Transverse colon (tissue), 4 donors: ENCODE measurements at regions of chr6 and their contacts with region 1.

Region 1: DNA sequence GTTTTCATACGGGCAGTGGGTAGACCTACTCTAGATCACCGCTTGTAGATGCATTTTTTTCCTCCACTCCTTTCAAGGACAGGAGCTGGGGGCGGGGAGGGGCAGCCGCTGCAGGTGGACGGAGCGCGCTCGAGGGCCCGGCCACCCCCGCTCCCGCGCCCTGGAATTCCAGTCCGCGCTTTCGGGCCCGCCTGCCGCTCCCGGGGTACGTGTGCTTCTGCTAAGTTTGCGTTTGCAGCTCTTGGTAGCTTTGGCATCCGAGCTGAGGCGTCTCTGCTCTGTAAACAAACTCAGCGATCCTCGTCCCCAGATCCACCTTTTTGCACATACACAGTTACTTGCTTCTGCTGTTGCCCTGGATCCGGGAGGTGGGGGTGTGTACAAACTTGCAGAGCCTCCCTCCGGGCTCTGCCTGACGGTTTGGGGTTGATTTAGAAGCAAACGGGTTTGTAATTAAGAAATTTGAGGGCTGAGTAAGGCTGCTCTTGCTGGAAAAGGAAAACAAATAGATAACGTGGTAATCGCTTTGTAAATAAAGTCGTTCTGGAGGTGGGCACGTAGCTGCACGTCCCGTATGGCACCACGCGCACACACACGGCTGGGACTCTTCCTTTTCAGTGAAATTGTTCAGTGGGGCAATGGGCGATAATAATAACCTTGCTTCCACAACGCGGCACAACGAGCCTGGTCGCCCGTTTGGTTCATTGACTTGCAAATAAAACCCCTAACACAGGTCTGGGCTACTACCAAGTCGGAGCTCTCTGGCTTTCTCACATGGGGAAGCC is 976 bp upstream of the CITED2 start:
- DNase-seq: peak; percentile 95
- H3K4me3 ChIP-seq: peak overlapping the region; percentile 80 to 87 (median 86)
- H3K27ac ChIP-seq: peak overlapping the region; percentile 92 to 99 (median 96)
- H3K4me1 ChIP-seq: peaks cover 0 to 28% (median 22%) of the 10 kb centered on the region in 4 donors
- H3K27me3 ChIP-seq: no peaks in the 10 kb centered on the region
- CTCF ChIP-seq: peak in 1 of 5 experiments; percentile 4
- EP300 ChIP-seq: peak; percentile 43
- POLR2A ChIP-seq: peak; percentile 76

Region 2: GRCh38 chr6:138817822-138818308 is 557.6 kb before region 1 on chr6:
- in situ Hi-C with region 1: loop called in 2 of 4 experiments (anchors 25 kb)
- intact Hi-C with region 1: no loop called
- DNase-seq: peak; percentile 89
- H3K4me3 ChIP-seq: no peak overlapping the region
- H3K27ac ChIP-seq: peak overlapping the region; percentile 50 to 72 (median 66)
- H3K4me1 ChIP-seq: peaks cover 0 to 26% (median 13%) of the 10 kb centered on the region in 4 donors
- H3K27me3 ChIP-seq: no peaks in the 10 kb centered on the region
- CTCF ChIP-seq: no peak
- EP300 ChIP-seq: no peak
- POLR2A ChIP-seq: peak; percentile 17

Region 3: DNA sequence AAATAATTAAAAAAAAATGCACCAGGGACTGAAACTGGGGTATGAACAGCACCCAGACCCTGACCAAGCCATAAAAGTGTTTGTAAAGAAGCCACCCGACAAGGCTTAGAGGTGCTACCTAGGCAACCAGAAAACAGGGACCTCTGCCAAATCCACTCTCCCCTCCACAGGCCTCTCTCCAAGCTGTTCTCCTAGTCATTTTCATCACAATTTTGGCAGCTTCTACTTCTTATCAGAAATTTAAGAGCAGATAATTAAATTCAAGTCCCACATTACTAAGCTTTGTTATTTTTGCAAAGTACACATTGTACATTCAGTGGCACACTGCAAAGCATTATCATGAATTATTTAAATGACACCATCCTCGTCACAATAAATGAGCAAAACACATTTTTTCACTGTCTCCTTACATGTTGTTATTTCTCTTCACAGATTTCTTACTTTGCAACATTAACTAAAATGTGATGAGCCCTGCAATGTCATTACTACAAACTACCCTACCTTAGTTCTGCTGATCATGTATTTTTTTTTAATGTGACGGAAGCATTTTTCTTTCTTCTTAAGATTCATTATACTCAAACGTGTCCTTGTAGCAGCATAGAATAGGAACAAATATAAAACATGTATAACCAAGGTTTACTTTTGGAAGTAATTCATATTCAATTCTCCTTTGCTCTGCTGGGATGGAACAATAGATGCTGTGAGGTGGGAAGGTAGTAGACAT is 541.4 kb before region 1 on chr6:
- in situ Hi-C with region 1: no loop called
- intact Hi-C with region 1: no loop called
- DNase-seq: no peak
- H3K4me3 ChIP-seq: no peak overlapping the region
- H3K27ac ChIP-seq: peak overlapping the region in 2 of 4 donors; percentile 47 to 52
- H3K4me1 ChIP-seq: peaks cover 0 to 6% (median 0%) of the 10 kb centered on the region in 4 donors
- H3K27me3 ChIP-seq: no peaks in the 10 kb centered on the region
- CTCF ChIP-seq: no peak
- EP300 ChIP-seq: no peak
- POLR2A ChIP-seq: no peak

Region 4: DNA sequence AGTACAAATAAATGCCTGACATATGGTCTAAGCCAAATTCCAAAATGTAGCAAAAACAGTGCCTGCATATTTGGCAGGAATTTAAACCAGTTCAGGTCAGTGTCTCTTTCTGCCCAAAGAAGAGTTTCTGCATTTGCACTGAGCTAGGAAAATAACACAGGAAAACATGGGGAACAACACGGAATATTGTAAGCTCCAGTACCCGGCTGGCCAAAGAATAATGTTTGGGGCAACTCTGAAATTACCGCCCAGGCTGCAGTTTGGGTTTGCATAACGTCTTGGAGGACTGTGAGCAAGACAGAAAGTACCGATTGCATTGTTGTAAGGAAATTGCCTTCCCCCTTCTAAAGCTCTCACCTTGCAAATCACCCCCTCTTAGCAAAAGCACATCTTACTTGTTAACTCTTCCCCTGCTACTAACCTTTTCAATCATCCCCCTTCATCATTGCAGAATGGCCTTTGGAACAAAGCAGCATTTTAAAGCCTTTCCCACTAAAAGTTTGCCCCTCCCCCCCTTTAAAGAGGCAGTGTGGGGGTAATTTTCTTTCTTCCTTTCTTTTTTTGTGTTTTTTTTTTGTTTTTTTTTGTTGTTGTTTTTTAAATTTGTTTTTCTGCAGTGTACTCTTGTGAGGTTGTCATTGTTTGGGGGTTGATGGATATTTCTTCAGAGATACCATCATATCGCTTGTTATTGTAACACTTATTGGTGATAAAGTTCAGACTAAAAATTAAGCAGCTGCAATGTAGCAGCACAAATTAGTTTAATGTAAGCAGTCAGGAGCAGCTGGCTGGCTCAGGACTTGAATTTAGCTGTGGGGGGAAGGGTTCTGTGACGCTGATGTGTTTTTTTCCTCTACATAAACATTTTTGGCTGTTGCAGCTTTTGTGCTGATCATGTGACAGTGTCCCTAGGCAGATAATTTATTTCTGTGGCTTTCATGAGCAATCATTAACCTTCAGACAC is 99.0 kb after region 1 on chr6:
- in situ Hi-C with region 1: no loop called
- intact Hi-C with region 1: loop called (anchors 10 kb)
- DNase-seq: peak; percentile 11
- H3K4me3 ChIP-seq: no peak overlapping the region
- H3K27ac ChIP-seq: peak overlapping the region; percentile 60 to 70 (median 64)
- H3K4me1 ChIP-seq: peaks cover 0 to 26% (median 2%) of the 10 kb centered on the region in 4 donors
- H3K27me3 ChIP-seq: no peaks in the 10 kb centered on the region
- CTCF ChIP-seq: no peak
- EP300 ChIP-seq: no peak
- POLR2A ChIP-seq: no peak

Region 5: DNA sequence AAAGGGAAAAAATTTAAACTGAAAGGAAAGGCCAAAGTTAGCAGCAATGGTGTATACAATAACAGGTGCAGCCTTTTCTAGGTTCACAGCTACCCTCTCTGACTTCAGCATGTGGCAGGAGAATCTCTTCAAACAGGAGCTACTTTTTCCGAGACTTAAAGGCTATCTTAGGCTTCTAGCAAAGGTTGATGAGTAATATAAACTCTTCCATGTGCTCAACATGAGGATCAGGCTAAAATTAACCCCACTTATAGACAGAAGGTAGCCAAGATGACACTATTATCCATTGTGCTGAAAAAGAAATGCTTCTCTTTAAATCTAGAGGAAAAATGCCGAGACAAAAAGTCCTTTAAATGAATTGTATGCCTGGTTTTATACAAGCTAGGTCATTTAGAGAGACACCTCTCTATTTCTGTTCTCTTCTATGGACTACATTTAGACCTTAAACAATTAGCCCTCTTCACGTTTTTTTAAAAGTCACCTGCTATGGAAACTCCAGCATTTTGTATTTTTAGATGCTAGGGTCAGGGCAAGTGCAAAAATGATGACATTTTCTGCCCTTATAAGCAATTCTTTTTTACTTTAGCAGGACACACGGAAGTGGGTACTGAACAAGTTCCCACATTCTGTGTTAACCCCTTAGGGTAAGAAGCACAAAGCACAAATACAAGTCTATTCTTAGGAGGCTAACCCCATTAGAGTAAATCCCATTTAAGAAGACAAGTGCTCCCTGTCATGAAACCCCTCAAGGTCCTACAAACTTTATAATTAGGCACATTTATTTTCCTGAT is 215.8 kb after region 1 on chr6:
- in situ Hi-C with region 1: loop called in 3 of 4 experiments (anchors 5 to 25 kb)
- intact Hi-C with region 1: loop called (anchors 2 kb)
- DNase-seq: no peak
- H3K4me3 ChIP-seq: no peak overlapping the region
- H3K27ac ChIP-seq: peak overlapping the region; percentile 81 to 84 (median 83)
- H3K4me1 ChIP-seq: peaks cover 39 to 92% (median 66%) of the 10 kb centered on the region in 4 donors
- H3K27me3 ChIP-seq: no peaks in the 10 kb centered on the region
- CTCF ChIP-seq: no peak
- EP300 ChIP-seq: no peak
- POLR2A ChIP-seq: no peak

Region 6: DNA sequence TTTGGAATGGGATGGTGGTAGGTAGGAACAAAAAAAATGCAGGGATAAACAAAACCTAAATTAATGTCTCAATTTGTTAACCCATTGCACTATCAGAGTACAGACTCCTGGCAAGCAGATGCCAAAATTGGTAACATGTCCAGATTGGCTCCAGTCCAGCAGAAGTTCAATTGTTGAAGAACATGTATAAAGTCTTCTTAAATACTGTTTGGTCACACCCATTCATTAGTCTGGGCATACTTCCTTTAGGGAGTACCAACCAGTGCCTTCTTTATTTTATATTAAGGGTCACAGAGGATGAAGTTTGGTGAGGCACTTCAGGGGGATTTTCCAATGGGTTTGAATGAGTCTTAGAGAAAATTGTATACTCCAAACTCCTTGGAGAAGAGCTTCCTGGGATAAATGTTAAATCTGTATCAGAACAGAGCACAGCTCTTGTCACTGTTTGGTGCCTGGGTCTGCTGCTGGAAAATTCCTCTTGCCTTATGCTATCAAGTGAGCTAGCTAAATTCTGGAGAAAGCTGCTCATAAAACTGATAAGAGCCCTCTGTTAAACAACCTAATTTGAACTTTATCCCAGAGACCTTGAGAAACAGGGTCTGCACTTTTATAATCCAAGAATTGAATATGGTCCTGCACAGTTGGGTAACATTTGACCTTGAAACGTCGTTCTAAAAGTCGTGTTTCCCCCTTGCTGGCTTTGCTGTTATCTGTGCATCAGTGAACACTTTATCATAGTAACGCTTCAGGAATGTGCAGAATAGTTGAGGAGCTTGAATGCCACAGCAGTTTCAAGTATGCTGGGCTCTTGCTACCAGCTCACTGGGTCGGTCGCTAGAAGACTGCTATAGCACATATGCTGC is 333.1 kb after region 1 on chr6:
- in situ Hi-C with region 1: no loop called
- intact Hi-C with region 1: loop called (anchors 10 kb)
- DNase-seq: no peak
- H3K4me3 ChIP-seq: no peak overlapping the region
- H3K27ac ChIP-seq: peak overlapping the region; percentile 4 to 57 (median 26)
- H3K4me1 ChIP-seq: peaks cover 13 to 31% (median 24%) of the 10 kb centered on the region in 4 donors
- H3K27me3 ChIP-seq: no peaks in the 10 kb centered on the region
- CTCF ChIP-seq: no peak
- EP300 ChIP-seq: no peak
- POLR2A ChIP-seq: no peak

Region 7: GRCh38 chr6:139778688-139779087 is 403.3 kb after region 1 on chr6:
- in situ Hi-C with region 1: no loop called
- intact Hi-C with region 1: loop called (anchors 10 kb)
- DNase-seq: no peak
- H3K4me3 ChIP-seq: no peak overlapping the region
- H3K27ac ChIP-seq: peak overlapping the region in 3 of 4 donors; percentile 6 to 62 (median 62)
- H3K4me1 ChIP-seq: peaks cover 0 to 11% (median 7%) of the 10 kb centered on the region in 4 donors
- H3K27me3 ChIP-seq: no peaks in the 10 kb centered on the region
- CTCF ChIP-seq: no peak
- EP300 ChIP-seq: no peak
- POLR2A ChIP-seq: no peak

Region 8: DNA sequence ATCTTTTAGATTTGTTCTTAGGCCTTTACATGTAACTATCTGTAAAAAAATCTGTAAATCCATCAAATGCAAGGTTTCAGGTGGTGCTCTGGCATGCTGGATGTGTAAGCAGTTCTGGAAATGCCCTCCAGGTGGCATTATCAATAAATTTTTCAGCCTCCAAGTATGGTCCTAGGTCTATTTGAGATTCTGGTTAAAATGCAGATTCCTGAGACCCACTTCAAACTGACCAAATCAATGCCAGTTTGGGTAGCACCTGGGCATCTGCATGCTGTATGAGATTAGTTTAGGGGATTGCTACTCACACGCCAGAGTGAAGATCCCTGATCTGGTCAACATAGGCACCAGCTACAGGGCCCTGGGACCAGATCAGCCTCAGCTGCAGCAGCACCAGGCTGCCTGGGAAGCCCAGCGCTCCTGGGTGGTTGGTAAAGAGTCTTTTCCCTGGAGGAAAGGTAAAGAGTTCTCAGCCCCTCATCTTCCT is 506.3 kb after region 1 on chr6:
- in situ Hi-C with region 1: loop called in 2 of 4 experiments (anchors 10 to 25 kb)
- intact Hi-C with region 1: no loop called
- DNase-seq: peak; percentile 55
- H3K4me3 ChIP-seq: no peak overlapping the region
- H3K27ac ChIP-seq: peak overlapping the region; percentile 27 to 55 (median 47)
- H3K4me1 ChIP-seq: peaks cover 7 to 21% (median 10%) of the 10 kb centered on the region in 4 donors
- H3K27me3 ChIP-seq: no peaks in the 10 kb centered on the region
- CTCF ChIP-seq: peak; percentile 57 to 75 (median 62)
- EP300 ChIP-seq: no peak
- POLR2A ChIP-seq: no peak